ENCODE measurements at regions of chr11 and their contacts with region 1.

Region 1: GRCh38 chr11:96054870-96055705 is 131.2 kb upstream of the MTMR2 start:
- DNase-seq: peak; percentile 66
- H3K4me3 ChIP-seq: no peak overlapping the region
- H3K27ac ChIP-seq: peak overlapping the region; percentile 66
- H3K4me1 ChIP-seq: peaks cover 65% of the 10 kb centered on the region
- H3K27me3 ChIP-seq: no peaks in the 10 kb centered on the region

Region 2: GRCh38 chr11:95065336-95065735 is 989.8 kb before region 1 on chr11:
- in situ Hi-C with region 1: no loop called
- DNase-seq: no peak
- H3K4me3 ChIP-seq: no peak overlapping the region
- H3K27ac ChIP-seq: no peak overlapping the region
- H3K4me1 ChIP-seq: peaks cover 12% of the 10 kb centered on the region
- H3K27me3 ChIP-seq: no peaks in the 10 kb centered on the region

Region 3: GRCh38 chr11:95584589-95584988 is 470.5 kb before region 1 on chr11:
- in situ Hi-C with region 1: no loop called
- DNase-seq: no peak
- H3K4me3 ChIP-seq: no peak overlapping the region
- H3K27ac ChIP-seq: peak overlapping the region; percentile 81
- H3K4me1 ChIP-seq: peaks cover 39% of the 10 kb centered on the region
- H3K27me3 ChIP-seq: no peaks in the 10 kb centered on the region

Region 4: GRCh38 chr11:95849087-95849825 is 205.8 kb before region 1 on chr11:
- in situ Hi-C with region 1: no loop called
- DNase-seq: peak; percentile 84
- H3K4me3 ChIP-seq: no peak overlapping the region
- H3K27ac ChIP-seq: peak overlapping the region; percentile 37
- H3K4me1 ChIP-seq: peaks cover 27% of the 10 kb centered on the region
- H3K27me3 ChIP-seq: no peaks in the 10 kb centered on the region

Region 5: DNA sequence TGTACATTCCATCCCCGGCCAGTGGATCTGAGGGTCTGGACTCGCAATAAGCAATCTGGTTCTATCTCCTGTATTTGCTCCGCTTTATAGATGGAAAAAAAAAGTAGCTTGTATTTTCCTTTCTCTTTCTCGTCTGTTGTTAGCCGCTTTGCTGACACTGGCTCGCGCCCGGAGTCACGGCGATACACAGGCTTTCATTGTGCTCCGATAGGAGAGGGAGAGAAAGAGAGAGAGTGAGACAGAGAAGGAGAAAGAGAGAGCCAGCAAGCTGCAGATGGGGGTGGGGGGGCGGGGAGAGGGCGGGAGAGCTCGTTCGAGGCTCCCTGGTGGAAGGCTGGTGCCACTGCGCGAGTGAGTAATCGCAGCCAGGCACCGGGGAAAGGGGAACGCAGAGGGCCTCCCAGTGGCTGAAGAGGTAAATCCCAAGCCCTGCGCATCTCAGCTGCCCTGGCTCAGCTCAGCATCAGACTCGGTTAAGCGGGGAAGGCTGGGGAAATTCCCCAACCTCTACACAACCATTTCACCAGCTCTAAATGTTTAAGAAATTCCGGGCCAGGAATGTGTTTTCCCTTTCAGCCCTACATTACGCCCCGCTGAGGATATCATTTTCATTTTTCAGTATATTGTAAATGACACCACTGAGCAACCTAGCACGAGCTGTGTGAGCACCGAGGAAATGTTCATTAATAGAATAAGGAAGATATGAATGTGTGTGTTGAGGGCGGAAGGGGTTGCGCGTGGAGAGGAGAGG is 288.0 kb after region 1 on chr11 and contains the start of gene MAML2:
- in situ Hi-C with region 1: loop called (anchors 10 kb)
- DNase-seq: peak; percentile 98
- H3K4me3 ChIP-seq: peak within 1 kb of the TSS; percentile 100
- H3K27ac ChIP-seq: peak within 1 kb of the TSS; percentile 80
- H3K4me1 ChIP-seq: peaks cover 26% of the 10 kb centered on the region
- H3K27me3 ChIP-seq: no peaks in the 10 kb centered on the region
- total RNA-seq, gene MAML2: 22.1 and 23.7 TPM in 2 replicates

Measured in GM23248 (cell line).